Activated CD4-positive, alpha-beta T cell treated with anti-CD3 and anti-CD28 coated beads for 36 hours (primary cell): ENCODE measurements at regions of chr16 and their contacts with region 1.

Region 1: GRCh38 chr16:81444448-81445121 is at the start of gene CMIP:
- DNase-seq: peak; percentile 89
- ATAC-seq: peak; percentile 73
- H3K4me3 Mint-ChIP-seq: peak within 1 kb of the TSS; percentile 96
- H3K27ac Mint-ChIP-seq: peak within 1 kb of the TSS; percentile 93
- H3K4me1 Mint-ChIP-seq: peaks cover 34% of the 10 kb centered on the region
- H3K27me3 Mint-ChIP-seq: no peaks in the 10 kb centered on the region
- total RNA-seq, gene CMIP: 39.1 to 40.3 TPM

Region 2: GRCh38 chr16:81077076-81077940 is 367.3 kb before region 1 on chr16 and contains the start of gene C16orf46:
- CTCF ChIA-PET with region 1: no interaction called
- POLR2A ChIA-PET with region 1: no interaction called
- intact Hi-C with region 1: loop called in 1 of 2 experiments (anchors 2 kb)
- DNase-seq: peak; percentile 99
- ATAC-seq: peak; percentile 86
- H3K4me3 Mint-ChIP-seq: no peak within 1 kb of the TSS
- H3K27ac Mint-ChIP-seq: peak within 1 kb of the TSS; percentile 84
- H3K4me1 Mint-ChIP-seq: peaks cover 7% of the 10 kb centered on the region
- H3K27me3 Mint-ChIP-seq: no peaks in the 10 kb centered on the region
- total RNA-seq, gene C16orf46: 0.28 to 0.34 TPM

Region 3: DNA sequence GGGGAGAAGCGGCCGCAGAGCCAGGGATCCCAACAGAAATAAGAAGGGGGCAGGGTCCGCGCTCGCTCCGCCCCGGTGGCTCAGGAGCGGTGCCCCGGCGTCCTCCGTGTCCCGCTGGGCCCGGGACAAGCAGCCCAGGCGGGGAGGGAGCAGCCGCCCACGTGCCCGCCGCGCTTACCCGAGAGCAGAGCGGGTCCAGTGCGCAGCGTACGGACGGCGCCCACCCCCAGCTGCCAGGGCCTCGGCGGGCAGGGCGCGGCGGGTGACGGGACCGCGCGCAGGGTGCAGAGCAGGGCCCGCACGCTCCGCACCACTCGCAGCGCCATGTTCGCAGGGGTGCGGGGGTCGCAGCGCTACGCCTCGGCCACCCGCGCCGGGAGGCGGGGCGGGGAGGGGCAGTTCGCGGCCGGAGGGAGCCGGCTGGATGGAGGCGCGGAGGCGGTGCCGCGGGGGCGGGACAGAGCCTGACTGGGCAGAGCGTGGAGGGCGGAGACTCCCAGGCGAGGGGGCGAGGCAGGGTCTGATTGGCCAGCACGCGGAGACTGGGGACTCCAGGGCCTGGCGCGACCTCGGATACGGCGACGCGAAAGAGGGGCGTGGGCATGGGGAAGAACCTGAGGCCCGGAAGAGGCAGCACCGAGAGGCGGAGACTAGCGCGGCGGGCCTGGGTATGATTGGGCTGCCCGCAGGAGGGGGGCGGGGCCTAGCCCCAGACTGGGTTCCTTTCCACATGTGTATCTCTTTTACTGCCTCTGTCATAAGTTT is 348.4 kb before region 1 on chr16 and contains the start of gene GCSH:
- CTCF ChIA-PET with region 1: no interaction called
- POLR2A ChIA-PET with region 1: no interaction called
- intact Hi-C with region 1: loop called in 1 of 2 experiments (anchors 2 kb)
- DNase-seq: peak; percentile 99
- ATAC-seq: peak; percentile 99
- H3K4me3 Mint-ChIP-seq: peak within 1 kb of the TSS; percentile 72
- H3K27ac Mint-ChIP-seq: peak within 1 kb of the TSS; percentile 78
- H3K4me1 Mint-ChIP-seq: peaks cover 16% of the 10 kb centered on the region
- H3K27me3 Mint-ChIP-seq: no peaks in the 10 kb centered on the region
- total RNA-seq, gene GCSH: 22.2 to 24.9 TPM

Region 4: DNA sequence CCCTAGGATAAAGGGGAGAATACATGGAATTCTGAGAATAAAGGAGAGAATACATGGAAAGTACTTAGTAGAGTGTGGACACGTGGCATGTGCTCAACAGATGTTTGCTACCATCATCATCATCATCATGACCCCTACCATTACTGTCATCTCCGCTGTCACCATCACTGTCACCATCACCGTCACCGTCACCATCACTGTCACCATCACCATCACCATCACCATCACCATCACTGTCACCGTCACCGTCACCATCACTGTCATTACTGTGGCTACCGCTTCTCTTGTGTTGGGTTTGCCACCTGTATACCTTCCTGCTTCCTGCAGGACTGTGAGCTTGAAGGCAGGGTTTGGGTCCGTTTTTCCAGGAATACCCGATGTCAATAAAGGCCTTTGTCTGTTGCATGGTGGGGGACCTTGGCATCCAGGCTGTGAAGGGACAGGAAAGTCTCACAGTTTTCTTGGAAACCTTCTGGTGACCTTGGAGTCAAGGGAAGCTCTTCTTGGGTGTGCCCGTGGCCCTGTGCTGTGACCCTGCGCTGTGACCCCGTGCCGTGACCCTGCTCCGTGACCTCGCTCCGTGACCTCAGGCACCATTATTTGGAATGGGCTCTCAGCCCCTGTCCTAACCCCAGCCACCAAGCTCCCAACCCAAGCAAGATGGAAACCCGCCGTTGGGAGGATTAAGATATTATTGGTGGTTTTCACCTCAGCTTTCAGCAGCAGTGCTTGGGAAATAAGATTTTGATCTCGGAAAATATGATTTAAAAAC is 14.4 kb after region 1 on chr16:
- CTCF ChIA-PET with region 1: no interaction called
- POLR2A ChIA-PET with region 1: no interaction called
- intact Hi-C with region 1: no loop called
- DNase-seq: no peak
- ATAC-seq: no peak
- H3K4me3 Mint-ChIP-seq: no peak overlapping the region
- H3K27ac Mint-ChIP-seq: peak overlapping the region; percentile 38
- H3K4me1 Mint-ChIP-seq: peaks cover 45% of the 10 kb centered on the region
- H3K27me3 Mint-ChIP-seq: no peaks in the 10 kb centered on the region

Region 5: DNA sequence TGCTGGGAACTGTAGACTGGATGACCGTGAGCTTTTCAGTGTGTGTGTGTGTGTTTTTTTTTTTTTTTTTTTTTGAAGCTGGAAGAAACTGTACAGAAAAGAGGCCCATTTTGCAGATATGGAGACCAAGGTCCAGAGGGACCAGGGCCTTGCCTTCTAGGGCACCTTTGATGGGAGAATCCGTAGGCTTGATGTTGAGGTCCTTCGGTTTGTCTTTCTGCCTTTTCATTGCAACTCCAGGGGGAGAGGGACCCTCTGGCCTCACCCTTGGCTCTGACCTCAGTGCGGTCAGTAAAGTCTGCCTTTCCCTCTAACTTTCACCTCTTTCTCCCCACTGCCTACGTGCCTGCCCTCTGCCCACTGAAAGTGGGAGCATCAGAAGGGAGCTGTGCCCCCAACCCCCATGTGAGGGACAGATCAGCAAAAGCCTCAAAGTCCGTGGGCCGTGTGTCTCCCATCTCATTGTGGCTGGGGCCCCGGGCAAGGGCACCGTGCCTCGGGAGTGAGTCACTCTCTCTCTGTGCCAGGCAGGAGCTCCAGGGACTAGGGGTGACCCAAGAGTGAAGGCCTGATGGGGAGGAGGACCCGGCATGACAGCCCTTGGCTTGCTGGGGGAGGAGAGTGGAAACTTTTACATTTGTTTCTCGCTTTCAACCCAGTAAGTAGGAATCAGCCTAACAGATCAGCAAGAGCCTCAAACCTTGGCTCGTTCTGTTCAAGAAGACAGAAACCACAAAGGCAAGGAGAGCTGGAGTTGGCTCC is 123.6 kb after region 1 on chr16:
- CTCF ChIA-PET with region 1: no interaction called
- POLR2A ChIA-PET with region 1: no interaction called
- intact Hi-C with region 1: loop called in 1 of 2 experiments (anchors 2 kb)
- DNase-seq: peak; percentile 85
- ATAC-seq: peak; percentile 98
- H3K4me3 Mint-ChIP-seq: peak overlapping the region; percentile 20
- H3K27ac Mint-ChIP-seq: peak overlapping the region; percentile 92
- H3K4me1 Mint-ChIP-seq: peaks cover 34% of the 10 kb centered on the region
- H3K27me3 Mint-ChIP-seq: no peaks in the 10 kb centered on the region

Region 6: GRCh38 chr16:81616321-81617055 is 171.9 kb after region 1 on chr16:
- CTCF ChIA-PET with region 1: no interaction called
- POLR2A ChIA-PET with region 1: no interaction called
- intact Hi-C with region 1: loop called in 1 of 2 experiments (anchors 1 kb)
- DNase-seq: peak; percentile 88
- ATAC-seq: peak; percentile 98
- H3K4me3 Mint-ChIP-seq: peak overlapping the region; percentile 28
- H3K27ac Mint-ChIP-seq: peak overlapping the region; percentile 92
- H3K4me1 Mint-ChIP-seq: peaks cover 3% of the 10 kb centered on the region
- H3K27me3 Mint-ChIP-seq: no peaks in the 10 kb centered on the region

Region 7: GRCh38 chr16:81632392-81633146 is 188.0 kb after region 1 on chr16:
- CTCF ChIA-PET with region 1: no interaction called
- POLR2A ChIA-PET with region 1: no interaction called
- intact Hi-C with region 1: loop called (anchors 2 to 5 kb)
- DNase-seq: peak; percentile 90
- ATAC-seq: peak; percentile 81
- H3K4me3 Mint-ChIP-seq: peak overlapping the region; percentile 47
- H3K27ac Mint-ChIP-seq: peak overlapping the region; percentile 97
- H3K4me1 Mint-ChIP-seq: peaks cover 67% of the 10 kb centered on the region
- H3K27me3 Mint-ChIP-seq: no peaks in the 10 kb centered on the region

Region 8: GRCh38 chr16:81778861-81779535 is 334.4 kb after region 1 on chr16 and contains the start of gene PLCG2:
- CTCF ChIA-PET with region 1: no interaction called
- POLR2A ChIA-PET with region 1: no interaction called
- intact Hi-C with region 1: loop called in 1 of 2 experiments (anchors 1 kb)
- DNase-seq: peak; percentile 83
- ATAC-seq: peak; percentile 99
- H3K4me3 Mint-ChIP-seq: peak within 1 kb of the TSS; percentile 67
- H3K27ac Mint-ChIP-seq: no peak within 1 kb of the TSS
- H3K4me1 Mint-ChIP-seq: peaks cover 6% of the 10 kb centered on the region
- H3K27me3 Mint-ChIP-seq: peaks cover 38% of the 10 kb centered on the region
- total RNA-seq, gene PLCG2: 7.0 to 7.6 TPM